WTC11 (cell line): ENCODE measurements at regions of chr11 and their contacts with region 1.

Region 1: GRCh38 chr11:118051611-118052461 is 25.0 kb upstream of the TMPRSS4 start:
- DNase-seq: no peak
- ATAC-seq: no peak
- H3K4me3 Mint-ChIP-seq: no peak overlapping the region
- H3K27ac Mint-ChIP-seq: no peak overlapping the region
- H3K4me1 Mint-ChIP-seq: no peaks in the 10 kb centered on the region; the same call in 1 of the 2 replicates
- H3K27me3 Mint-ChIP-seq: no peaks in the 10 kb centered on the region
- CTCF ChIP-seq: no peak

Region 2: GRCh38 chr11:117807482-117808327 is 244.1 kb before region 1 on chr11:
- CTCF ChIA-PET with region 1: interaction called, 14 read pairs
- POLR2A ChIA-PET with region 1: no interaction called
- DNase-seq: peak; percentile 85
- ATAC-seq: peak; percentile 69
- H3K4me3 Mint-ChIP-seq: no peak overlapping the region
- H3K27ac Mint-ChIP-seq: no peak overlapping the region
- H3K4me1 Mint-ChIP-seq: no peaks in the 10 kb centered on the region
- H3K27me3 Mint-ChIP-seq: peaks cover 8% of the 10 kb centered on the region
- CTCF ChIP-seq: peak; percentile 85

Region 3: GRCh38 chr11:117817368-117818040 is 234.3 kb before region 1 on chr11:
- CTCF ChIA-PET with region 1: interaction called, 37 read pairs
- POLR2A ChIA-PET with region 1: no interaction called
- DNase-seq: peak; percentile 89
- ATAC-seq: peak; percentile 33
- H3K4me3 Mint-ChIP-seq: peak overlapping the region; percentile 48
- H3K27ac Mint-ChIP-seq: no peak overlapping the region
- H3K4me1 Mint-ChIP-seq: peaks cover 56% of the 10 kb centered on the region
- H3K27me3 Mint-ChIP-seq: peaks cover 5% of the 10 kb centered on the region; the same call in 1 of the 2 replicates
- CTCF ChIP-seq: peak; percentile 99

Region 4: DNA sequence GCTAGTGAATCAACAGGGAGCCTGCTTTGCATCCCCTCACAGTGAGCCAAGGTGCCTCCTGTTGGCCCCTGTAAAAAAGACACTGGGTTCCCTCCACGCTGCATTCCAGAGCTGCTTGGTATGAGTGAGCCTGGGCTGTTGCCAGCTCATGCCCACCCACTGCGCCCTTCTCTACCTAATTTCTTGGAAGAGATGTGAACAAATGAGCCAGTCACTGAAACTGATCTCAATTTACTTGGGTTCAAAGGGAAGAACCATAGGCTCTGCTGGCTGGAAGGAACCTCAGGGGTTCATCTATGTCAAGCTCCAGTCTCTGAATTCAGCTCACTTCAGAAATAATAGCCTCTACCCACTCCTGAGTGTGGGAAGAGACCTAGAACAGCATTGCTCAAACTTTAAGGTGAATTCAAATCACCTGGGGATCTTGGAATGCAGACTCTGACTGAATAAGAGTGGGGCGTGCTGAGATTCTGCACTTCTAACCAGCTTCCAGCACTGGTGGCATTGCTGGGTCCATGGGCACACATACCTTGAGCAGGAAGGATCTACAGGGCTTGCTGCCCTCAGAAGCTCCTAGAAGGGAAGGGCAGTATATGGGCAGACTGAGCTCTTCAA is 19.7 kb after region 1 on chr11:
- CTCF ChIA-PET with region 1: interaction called, 10 read pairs
- POLR2A ChIA-PET with region 1: no interaction called
- DNase-seq: no peak
- ATAC-seq: 0 out of 2 replicates have a peak, but pooled peaks have one; percentile 35
- H3K4me3 Mint-ChIP-seq: no peak overlapping the region
- H3K27ac Mint-ChIP-seq: no peak overlapping the region
- H3K4me1 Mint-ChIP-seq: peaks cover 10% of the 10 kb centered on the region
- H3K27me3 Mint-ChIP-seq: no peaks in the 10 kb centered on the region
- CTCF ChIP-seq: no peak

Region 5: DNA sequence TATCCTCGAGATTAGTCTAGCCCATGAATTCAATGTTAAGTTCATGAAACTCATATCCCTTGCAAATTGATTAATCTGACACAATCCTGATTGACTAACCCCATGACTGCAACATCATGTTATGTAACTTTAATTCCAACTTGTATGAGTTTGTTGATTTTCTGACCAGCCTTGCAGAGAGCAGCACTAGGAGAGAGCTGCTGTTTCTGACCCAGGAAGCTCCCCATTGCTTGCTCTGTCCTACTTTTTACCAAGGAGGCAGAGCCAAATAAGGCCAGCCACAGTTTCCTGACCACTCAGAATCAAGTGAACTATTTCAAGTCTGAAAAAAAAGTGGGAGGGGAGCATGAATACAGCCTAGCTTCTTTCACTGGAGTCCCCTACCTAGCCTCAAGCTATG is 187.1 kb after region 1 on chr11:
- CTCF ChIA-PET with region 1: no interaction called
- POLR2A ChIA-PET with region 1: no interaction called
- DNase-seq: no peak
- ATAC-seq: peak; percentile 78
- H3K4me3 Mint-ChIP-seq: no peak overlapping the region
- H3K27ac Mint-ChIP-seq: no peak overlapping the region
- H3K4me1 Mint-ChIP-seq: peaks cover 18% of the 10 kb centered on the region
- H3K27me3 Mint-ChIP-seq: peaks cover 8% of the 10 kb centered on the region
- CTCF ChIP-seq: no peak